Activated CD4-positive, alpha-beta memory T cell treated with anti-CD3 and anti-CD28 coated beads for 36 hours (primary cell): ENCODE measurements at regions of chr16 and their contacts with region 1.

Region 1: DNA sequence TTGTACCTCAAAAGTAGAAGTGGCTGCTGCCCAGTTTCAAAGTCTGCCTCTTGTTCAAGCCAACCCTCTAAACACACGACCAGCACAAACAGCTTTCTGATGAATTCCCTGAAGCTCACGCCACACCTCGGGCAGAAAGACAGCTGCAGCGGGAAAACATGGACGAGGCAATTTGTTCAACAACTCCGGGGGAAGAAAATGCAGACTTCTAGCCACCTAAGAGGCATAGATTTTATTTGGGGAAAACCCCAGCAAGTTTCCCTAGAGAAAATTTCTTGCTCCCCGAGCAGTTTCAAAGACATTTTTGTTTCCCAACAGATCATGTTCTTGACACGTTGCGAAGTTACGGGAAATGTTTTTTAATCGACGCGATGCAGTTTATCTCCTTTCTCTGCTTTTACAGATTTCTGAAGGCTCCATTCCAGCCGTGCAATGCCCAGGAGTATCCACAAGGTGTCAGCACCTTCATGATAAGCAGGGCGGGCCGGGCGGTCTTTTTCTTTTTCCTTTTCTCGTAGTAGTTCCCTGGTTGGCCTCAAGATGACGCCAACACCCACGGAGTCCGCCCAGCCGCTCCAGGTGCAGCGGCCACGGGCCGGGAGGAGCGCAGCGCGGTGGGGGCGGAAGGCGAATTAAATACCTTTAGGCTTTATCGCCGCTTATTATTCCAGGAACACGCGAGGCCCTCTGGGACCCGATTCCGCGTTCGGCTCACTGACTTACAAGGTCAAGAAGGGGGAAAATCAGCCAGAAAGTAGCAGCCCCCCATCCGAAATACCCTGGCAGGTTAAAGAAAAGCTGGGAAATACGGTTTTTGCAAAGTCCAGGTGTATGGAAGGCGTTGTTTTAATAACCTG is 2.9 kb upstream of the FOXC2 start:
- DNase-seq: peak; percentile 91
- H3K4me3 Mint-ChIP-seq: no peak overlapping the region
- H3K27ac Mint-ChIP-seq: peak overlapping the region; percentile 23
- H3K4me1 Mint-ChIP-seq: peaks cover 11% of the 10 kb centered on the region
- H3K27me3 Mint-ChIP-seq: peaks cover 48% of the 10 kb centered on the region

Region 2: DNA sequence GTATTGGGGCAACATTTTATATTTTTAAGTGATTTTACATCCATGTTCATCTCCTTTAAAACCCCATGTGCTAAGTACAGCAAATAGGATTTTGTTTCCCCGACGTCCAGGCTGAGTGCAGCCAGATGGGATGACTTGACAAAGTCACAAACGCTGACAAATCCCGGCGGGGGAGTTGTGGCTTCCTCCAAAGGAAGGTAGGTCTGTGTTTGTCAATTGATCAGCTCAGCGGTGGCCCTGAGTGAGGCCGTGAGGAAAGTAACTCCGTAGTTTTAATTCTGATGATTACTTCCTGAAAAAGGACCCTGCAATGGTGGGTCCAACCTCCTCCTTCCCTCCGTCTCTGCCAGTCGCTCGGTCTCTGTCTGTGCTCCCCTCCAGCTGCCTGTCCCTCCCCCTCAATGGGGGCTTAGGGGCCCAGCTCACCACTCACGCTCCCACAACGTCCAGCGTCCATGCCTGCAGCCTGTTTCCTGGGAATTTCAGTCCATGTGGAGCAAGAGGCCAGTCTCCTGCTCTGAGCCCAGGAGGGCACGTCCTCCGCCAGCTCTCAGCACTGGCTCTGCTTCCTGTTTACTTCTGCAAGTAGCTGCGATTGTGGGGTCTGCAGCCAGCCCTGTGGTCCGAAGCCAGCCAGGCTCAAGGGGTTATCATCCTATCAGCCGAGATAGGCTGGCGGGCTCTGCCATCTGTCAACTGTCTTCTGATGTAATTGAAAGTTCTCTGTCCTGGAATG is 262.8 kb before region 1 on chr16:
- CTCF ChIA-PET with region 1: no interaction called
- POLR2A ChIA-PET with region 1: no interaction called
- intact Hi-C with region 1: no loop called
- DNase-seq: no peak
- H3K4me3 Mint-ChIP-seq: no peak overlapping the region
- H3K27ac Mint-ChIP-seq: no peak overlapping the region
- H3K4me1 Mint-ChIP-seq: no peaks in the 10 kb centered on the region
- H3K27me3 Mint-ChIP-seq: peaks cover 48% of the 10 kb centered on the region

Region 3: DNA sequence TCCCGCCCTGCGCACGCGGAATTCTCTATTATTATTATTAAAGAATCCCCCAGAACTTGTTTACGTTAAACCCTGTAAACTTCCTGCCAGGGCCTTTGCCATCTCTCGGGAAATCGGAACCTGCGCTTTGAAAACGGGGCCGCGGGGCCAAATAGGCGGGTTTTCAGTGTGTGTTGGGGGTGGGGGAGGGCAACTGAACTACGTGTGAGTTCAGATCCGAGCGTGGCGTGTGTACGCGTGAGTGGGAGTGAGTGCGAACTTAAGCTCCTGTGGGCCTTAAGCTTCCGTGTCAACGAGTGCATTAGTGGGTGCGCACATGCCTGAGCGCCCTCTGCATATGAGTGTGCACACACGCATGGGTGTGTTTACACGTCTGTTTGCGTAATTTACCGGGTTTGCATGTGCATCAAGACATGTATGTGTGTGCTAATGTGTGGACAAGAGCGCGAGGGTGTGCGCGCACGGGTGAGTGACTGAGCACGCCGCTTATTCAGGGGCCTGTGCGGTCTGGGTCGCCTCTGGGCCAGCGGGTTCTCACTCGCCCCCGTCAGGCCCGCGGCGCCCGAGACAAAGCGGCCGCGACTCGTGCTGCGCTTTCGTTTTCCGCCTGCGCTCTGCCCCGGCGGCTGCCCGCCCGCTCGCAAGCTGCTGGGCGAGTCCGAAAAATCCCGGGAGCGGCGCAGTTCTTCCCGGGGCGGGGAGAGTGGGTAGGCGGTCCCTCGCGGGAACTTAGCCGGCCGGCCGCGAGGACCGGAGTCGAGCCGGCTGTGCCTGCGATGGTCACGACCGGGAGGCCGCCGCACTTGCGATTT is 54.6 kb before region 1 on chr16:
- CTCF ChIA-PET with region 1: no interaction called
- POLR2A ChIA-PET with region 1: no interaction called
- intact Hi-C with region 1: loop called (anchors 5 kb)
- DNase-seq: no peak
- H3K4me3 Mint-ChIP-seq: peak overlapping the region; percentile 72
- H3K27ac Mint-ChIP-seq: peak overlapping the region; percentile 56
- H3K4me1 Mint-ChIP-seq: peaks cover 28% of the 10 kb centered on the region
- H3K27me3 Mint-ChIP-seq: peaks cover 64% of the 10 kb centered on the region

Region 4: DNA sequence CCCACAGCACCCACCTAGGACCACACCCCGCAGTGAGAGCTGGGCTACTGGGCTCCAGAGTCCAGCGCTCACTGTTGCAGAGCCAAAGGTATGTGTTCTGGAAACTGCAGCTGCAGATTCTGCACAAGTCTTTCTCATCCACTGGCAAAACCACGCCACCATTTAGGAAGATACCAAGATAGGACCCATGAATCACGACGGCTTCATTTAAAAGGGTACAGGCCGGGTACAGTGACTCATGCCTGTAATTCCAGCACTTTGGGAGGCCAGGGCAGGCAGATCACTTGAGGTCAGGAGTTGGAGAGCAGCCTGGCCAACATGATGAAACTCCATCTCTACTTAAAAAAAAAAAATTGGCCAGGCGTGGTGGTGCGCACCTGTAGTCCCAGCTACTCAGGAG is 34.6 kb before region 1 on chr16:
- CTCF ChIA-PET with region 1: no interaction called
- POLR2A ChIA-PET with region 1: no interaction called
- intact Hi-C with region 1: no loop called
- DNase-seq: no peak
- H3K4me3 Mint-ChIP-seq: no peak overlapping the region
- H3K27ac Mint-ChIP-seq: no peak overlapping the region
- H3K4me1 Mint-ChIP-seq: no peaks in the 10 kb centered on the region
- H3K27me3 Mint-ChIP-seq: no peaks in the 10 kb centered on the region

Region 5: DNA sequence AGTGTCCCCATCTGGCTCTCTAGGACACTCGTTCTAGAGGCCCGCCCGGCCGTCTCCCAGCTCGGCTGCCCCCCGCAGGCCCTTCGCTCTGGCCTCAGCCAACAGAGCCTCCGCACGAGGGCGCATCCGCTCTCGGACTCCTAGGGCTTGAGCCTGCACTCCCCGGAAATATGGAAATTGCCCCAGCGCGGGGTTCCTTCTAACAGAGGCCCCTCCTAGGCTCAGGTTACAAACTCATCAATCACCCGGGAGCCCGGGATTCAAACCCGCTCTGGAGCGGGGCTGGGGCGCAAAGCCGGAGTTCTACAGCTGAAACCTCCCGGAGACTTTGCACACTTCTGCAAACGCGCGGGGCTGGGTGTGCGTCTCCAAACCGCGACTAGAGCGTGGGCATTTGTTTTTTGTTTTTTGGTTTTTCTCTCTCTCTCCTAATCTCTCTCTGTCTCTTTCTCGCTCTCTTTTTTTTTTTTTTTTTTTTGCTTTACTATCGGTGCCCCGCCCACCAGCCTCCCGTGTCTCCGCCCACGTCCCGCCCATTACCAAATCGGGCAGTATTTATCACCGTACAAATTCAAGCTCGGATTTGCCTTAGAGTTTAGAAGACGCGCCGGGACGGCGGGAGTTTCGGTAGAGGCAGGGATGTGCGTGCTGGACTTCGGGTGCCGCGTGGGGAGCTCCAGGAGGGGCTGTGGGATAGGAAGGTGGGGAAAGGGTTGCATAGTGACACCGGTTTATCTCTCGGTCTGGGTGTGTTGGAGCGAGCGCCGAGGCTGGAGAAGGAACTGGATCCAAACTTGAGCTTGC is 12.2 kb after region 1 on chr16:
- CTCF ChIA-PET with region 1: interaction called, 14 read pairs
- POLR2A ChIA-PET with region 1: no interaction called
- intact Hi-C with region 1: no loop called
- DNase-seq: peak; percentile 66
- H3K4me3 Mint-ChIP-seq: peak overlapping the region; percentile 59
- H3K27ac Mint-ChIP-seq: no peak overlapping the region
- H3K4me1 Mint-ChIP-seq: peaks cover 11% of the 10 kb centered on the region
- H3K27me3 Mint-ChIP-seq: peaks cover 68% of the 10 kb centered on the region

Region 6: GRCh38 chr16:86761111-86762031 is 197.7 kb after region 1 on chr16:
- CTCF ChIA-PET with region 1: interaction called, 3 read pairs
- POLR2A ChIA-PET with region 1: no interaction called
- intact Hi-C with region 1: loop called (anchors 2 kb)
- DNase-seq: peak; percentile 50
- H3K4me3 Mint-ChIP-seq: no peak overlapping the region
- H3K27ac Mint-ChIP-seq: no peak overlapping the region
- H3K4me1 Mint-ChIP-seq: no peaks in the 10 kb centered on the region
- H3K27me3 Mint-ChIP-seq: peaks cover 28% of the 10 kb centered on the region

Region 7: DNA sequence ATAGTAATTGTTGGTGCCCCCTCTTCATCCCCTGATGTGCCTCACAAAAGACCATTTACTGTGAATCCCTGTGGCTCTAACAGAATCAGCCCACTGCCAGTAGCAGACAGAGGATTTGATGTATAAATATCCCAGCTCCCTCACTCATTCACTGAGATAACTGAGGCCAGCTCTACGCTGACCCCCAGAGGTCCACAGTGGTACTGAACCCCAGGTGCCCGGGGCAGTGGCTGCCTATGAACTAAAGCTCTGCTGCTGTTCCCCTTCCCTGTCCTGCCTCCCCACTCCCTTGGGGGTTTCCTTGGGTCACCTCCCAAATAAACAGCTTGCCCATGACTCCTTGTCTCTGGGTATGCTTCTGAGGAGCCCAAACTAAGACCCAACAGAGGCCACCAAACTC is 310.4 kb after region 1 on chr16:
- CTCF ChIA-PET with region 1: interaction called, 36 read pairs
- POLR2A ChIA-PET with region 1: no interaction called
- intact Hi-C with region 1: loop called (anchors 1 kb)
- DNase-seq: peak; percentile 49
- H3K4me3 Mint-ChIP-seq: no peak overlapping the region
- H3K27ac Mint-ChIP-seq: no peak overlapping the region
- H3K4me1 Mint-ChIP-seq: no peaks in the 10 kb centered on the region
- H3K27me3 Mint-ChIP-seq: peaks cover 30% of the 10 kb centered on the region

Region 8: DNA sequence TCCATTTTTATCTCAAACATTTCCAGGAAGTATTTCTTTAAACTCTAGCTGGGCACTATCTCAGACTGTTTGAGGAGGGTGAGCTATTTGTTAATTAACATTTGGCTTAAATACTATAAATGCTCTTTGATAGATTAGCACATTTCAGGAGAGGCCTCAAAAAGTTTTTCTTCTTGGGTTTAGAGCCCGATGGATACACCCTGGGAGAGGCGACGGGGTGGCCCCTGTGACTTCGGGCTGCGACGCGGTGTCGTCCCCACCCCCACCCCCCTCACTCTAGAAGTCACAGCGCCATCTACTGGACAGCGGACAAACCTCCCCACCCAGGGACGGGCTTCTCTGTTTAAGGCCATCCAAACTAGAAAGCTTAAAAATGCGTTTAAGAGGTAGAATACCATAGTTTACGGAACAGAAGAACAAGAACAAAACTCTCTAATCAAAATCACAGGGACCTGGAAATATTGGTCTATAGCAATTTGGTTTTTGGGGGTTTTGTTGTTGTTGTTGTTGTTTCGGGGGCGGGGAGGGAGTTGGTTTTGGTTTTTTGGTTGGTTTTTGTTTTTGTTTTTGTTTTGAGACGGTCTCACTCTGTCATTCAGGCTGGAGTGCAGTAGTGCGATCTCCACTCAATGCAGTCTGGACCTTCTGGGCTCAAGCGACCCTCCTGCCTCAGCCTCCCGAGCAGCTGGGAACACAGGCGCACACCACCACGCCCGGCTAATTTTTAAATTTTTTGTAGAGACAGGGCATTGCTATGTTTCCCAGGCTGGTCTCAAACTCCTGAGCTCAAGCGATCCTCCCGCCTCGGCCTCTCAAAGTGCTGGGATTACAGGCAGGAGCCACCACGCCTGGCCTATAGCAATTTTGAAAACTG is 499.1 kb after region 1 on chr16:
- CTCF ChIA-PET with region 1: interaction called, 48 read pairs
- POLR2A ChIA-PET with region 1: no interaction called
- intact Hi-C with region 1: loop called (anchors 1 kb)
- DNase-seq: peak; percentile 72
- H3K4me3 Mint-ChIP-seq: no peak overlapping the region
- H3K27ac Mint-ChIP-seq: no peak overlapping the region
- H3K4me1 Mint-ChIP-seq: no peaks in the 10 kb centered on the region
- H3K27me3 Mint-ChIP-seq: peaks cover 31% of the 10 kb centered on the region

Region 9: DNA sequence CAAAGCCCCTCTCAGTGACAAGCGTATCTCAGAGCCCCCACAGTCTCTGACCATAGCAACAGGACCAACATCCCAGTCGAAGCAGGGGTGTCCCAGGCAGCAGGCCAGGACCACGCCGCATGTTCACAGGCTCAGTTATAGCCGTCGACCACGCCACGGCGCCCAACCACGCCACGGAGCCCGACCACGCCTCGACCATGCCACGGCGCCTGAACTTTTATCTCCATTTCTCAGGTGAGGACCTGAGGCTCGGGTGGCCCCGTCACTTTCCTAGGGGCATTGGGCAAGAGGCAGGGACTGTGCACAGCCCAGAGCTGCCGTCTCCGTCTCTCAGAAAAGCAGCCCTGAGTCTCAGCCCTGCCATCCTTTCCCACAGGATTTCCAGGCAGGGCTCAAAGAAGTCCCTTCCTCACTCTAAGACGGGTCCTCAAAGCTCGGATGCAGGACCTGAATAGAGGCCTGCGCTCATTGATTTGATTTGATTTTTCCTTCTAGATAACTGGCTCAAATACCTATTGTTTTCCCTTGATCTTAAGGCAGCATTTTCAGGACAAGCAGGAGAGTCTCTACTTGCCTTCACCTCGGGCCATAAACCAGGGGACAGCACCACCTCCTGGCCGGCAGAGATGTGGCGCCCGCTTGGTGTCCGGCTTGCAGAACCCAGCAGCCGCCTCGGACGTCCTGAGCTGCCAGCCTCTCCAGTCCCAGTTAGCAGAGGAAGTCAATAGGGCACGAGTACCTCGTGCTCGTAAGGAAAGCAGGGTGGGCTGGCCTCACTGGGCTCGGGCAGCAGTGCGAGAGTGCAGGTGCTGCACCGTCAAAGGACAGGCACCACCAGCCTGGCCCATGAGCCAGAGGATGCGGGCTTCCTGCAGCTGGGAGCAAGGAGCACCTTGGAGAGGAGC is 714.7 kb after region 1 on chr16:
- CTCF ChIA-PET with region 1: interaction called, 7 read pairs
- POLR2A ChIA-PET with region 1: no interaction called
- intact Hi-C with region 1: loop called (anchors 2 kb)
- DNase-seq: peak; percentile 67
- H3K4me3 Mint-ChIP-seq: no peak overlapping the region
- H3K27ac Mint-ChIP-seq: no peak overlapping the region
- H3K4me1 Mint-ChIP-seq: peaks cover 5% of the 10 kb centered on the region
- H3K27me3 Mint-ChIP-seq: no peaks in the 10 kb centered on the region